ENCODE measurements at regions of chr12 and their contacts with region 1.

Region 1: DNA sequence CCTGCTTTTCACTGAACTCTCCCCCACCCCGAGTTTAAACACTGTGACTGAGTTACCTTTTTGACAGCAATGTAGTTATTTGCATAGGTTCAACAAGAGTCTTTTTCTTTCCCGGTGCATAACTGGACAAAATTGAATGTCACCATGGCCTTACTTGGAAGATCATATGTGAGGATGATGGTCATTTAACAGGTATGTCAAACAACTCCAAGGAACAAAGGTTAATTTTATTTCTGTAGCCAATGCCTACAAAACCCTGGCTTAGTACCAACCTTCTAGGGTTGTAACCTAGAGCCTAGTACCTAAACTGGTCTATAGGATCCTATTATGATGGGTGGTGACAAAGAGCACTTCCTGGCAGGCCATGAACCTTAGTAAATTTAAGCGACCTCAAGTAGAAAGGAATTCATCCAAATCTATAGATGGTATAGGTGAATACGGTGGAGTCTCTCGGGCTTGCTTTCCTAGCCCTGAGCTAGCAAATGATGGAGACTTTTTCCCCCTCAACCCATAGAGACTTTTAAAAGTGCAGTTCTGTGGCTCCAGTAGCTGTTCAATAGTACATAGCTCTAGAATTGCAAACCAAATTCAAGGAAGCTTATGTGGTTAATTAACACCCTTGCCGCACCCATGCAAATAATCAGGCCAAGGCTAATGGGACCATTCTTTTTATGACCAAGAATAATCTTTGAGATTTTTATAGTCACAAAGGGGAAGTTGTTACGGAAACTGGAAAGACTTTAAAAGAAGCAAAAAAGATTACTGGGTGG is 89.0 kb downstream of the SLC38A1 start:
- DNase-seq: no peak
- H3K4me3 ChIP-seq: no peak overlapping the region
- H3K4me3 Mint-ChIP-seq: no peak overlapping the region
- H3K27ac Mint-ChIP-seq: no peak overlapping the region
- H3K4me1 ChIP-seq: 0 out of 2 replicates have a peak, but pooled peaks cover 8% of the 10 kb centered on the region
- H3K4me1 Mint-ChIP-seq: no peaks in the 10 kb centered on the region
- H3K27me3 ChIP-seq: no peaks in the 10 kb centered on the region; the same call in 1 of the 2 replicates
- H3K27me3 Mint-ChIP-seq: no peaks in the 10 kb centered on the region
- CTCF ChIP-seq: no peak

Region 2: DNA sequence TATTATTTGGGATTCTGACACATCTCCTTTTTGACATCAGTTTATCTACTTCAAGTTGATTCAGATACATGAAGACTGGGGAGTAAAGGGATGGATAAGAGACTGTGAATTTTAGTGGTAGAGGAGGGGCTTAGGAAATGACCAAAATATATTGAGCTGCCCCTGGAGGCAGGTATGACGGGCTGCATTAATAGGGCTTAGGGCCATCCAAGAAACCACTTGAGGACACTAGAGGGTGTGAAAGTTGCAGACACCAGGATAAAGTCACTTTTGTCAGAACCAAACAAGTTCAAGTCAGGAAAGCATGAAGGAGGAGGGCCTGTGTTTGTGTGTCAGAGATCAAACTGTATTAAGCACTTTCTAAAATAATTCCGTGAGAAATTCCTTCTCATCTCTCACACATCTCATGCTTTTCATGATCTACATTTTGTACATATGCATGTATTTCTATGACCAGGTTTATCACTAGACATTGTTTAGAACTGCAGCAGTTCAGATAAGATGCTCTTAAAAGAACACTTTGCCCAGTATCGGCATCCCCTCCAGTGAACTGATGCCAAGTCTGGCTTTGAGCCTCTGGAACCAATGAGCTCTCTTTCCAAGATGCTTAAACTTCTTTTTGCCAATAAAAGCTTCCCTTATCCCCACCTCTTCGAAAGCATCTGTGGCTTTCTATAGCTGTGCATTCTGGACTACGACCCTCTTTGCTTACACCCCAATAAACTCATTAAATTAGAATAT is 48.0 kb before region 1 on chr12:
- CTCF ChIA-PET with region 1: no interaction called
- POLR2A ChIA-PET with region 1: no interaction called
- intact Hi-C with region 1: loop called (anchors 5 kb)
- DNase-seq: peak; percentile 49 to 60
- H3K4me3 ChIP-seq: no peak overlapping the region
- H3K4me3 Mint-ChIP-seq: no peak overlapping the region
- H3K27ac Mint-ChIP-seq: no peak overlapping the region
- H3K4me1 ChIP-seq: peaks cover 18% of the 10 kb centered on the region
- H3K4me1 Mint-ChIP-seq: peaks cover 25% of the 10 kb centered on the region
- H3K27me3 ChIP-seq: no peaks in the 10 kb centered on the region
- H3K27me3 Mint-ChIP-seq: peaks cover 5% of the 10 kb centered on the region
- CTCF ChIP-seq: peak; percentile 32 to 78

Region 3: GRCh38 chr12:46292755-46293402 is 113.0 kb after region 1 on chr12:
- CTCF ChIA-PET with region 1: no interaction called
- POLR2A ChIA-PET with region 1: no interaction called
- intact Hi-C with region 1: no loop called
- DNase-seq: no peak
- H3K4me3 ChIP-seq: no peak overlapping the region
- H3K4me3 Mint-ChIP-seq: no peak overlapping the region
- H3K27ac Mint-ChIP-seq: no peak overlapping the region
- H3K4me1 ChIP-seq: no peaks in the 10 kb centered on the region
- H3K4me1 Mint-ChIP-seq: no peaks in the 10 kb centered on the region
- H3K27me3 ChIP-seq: no peaks in the 10 kb centered on the region
- H3K27me3 Mint-ChIP-seq: peaks cover 13% of the 10 kb centered on the region
- CTCF ChIP-seq: no peak